ENCODE measurements at regions of chr13 and their contacts with region 1.

Region 1: DNA sequence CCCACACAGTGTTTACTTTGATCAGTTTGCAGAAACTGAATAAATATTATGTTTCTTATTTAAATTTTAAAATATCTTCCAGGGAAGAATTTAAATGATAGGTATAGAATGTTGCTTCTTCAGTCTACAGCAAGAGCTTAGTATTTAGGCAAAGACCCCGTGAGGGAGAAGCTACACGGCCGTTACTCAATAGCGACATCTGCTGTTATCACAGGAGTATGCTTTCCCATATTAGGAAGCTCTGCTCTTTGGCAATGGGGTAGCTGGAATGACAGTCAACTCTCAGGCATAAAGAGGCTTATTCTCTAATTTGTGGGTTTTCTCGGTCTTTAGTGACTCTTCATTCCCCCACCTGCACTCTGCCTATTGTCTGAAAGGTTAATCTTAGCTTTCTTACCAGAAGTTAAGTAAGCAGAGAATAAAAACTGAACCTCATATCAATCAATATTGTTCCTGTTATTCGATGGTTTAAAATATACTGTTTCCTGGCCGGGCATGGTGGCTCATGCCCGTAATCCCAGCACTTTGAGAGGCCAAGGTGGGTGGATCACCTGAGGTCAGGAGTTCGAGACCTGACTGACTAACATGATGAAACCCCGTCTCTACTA is 13.2 kb upstream of the LHFPL6 start:
- DNase-seq: no peak
- H3K4me3 ChIP-seq: no peak overlapping the region
- H3K27ac ChIP-seq: no peak overlapping the region
- H3K4me1 ChIP-seq: peaks cover 0 to 9% (median 0%) of the 10 kb centered on the region in 4 donors
- H3K27me3 ChIP-seq: no peaks in the 10 kb centered on the region
- CTCF ChIP-seq: peak; percentile 87 to 96 (median 93)
- EP300 ChIP-seq: no peak
- POLR2A ChIP-seq: no peak

Region 2: DNA sequence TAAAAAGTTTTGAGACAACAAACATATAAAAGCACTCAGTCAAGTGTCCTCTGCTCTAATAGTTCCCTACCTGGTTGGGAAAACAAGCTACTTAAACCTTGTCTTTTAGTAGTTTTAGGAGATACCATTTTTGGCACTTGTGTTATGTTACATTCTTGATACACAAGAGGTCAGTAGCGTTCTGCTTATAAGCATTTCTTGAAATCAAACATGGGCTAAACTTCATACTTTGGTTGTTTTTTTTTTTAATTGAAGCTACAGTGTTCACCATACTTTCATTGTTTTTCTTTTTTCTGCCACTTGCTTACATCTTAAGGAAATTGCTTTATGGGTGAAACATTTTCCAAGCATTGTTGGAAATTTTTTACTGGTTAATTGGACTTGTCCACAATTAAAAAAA is 565.0 kb before region 1 on chr13:
- intact Hi-C with region 1: loop called (anchors 5 kb)
- DNase-seq: no peak
- H3K4me3 ChIP-seq: no peak overlapping the region
- H3K27ac ChIP-seq: no peak overlapping the region
- H3K4me1 ChIP-seq: no peaks in the 10 kb centered on the region
- H3K27me3 ChIP-seq: no peaks in the 10 kb centered on the region
- CTCF ChIP-seq: peak; percentile 13 to 32 (median 21)
- EP300 ChIP-seq: no peak
- POLR2A ChIP-seq: no peak

Region 3: GRCh38 chr13:39144941-39145533 is 471.2 kb before region 1 on chr13:
- intact Hi-C with region 1: loop called (anchors 2 kb)
- DNase-seq: no peak
- H3K4me3 ChIP-seq: peak overlapping the region in 2 of 4 donors; percentile 8 to 13
- H3K27ac ChIP-seq: peak overlapping the region in 1 of 4 donors; percentile 18
- H3K4me1 ChIP-seq: peaks cover 3 to 6% (median 4%) of the 10 kb centered on the region in 4 donors
- H3K27me3 ChIP-seq: no peaks in the 10 kb centered on the region
- CTCF ChIP-seq: peak; percentile 72 to 82 (median 75)
- EP300 ChIP-seq: no peak
- POLR2A ChIP-seq: no peak

Region 4: GRCh38 chr13:39263033-39263432 is 353.2 kb before region 1 on chr13:
- intact Hi-C with region 1: loop called (anchors 5 kb)
- DNase-seq: no peak
- H3K4me3 ChIP-seq: no peak overlapping the region
- H3K27ac ChIP-seq: no peak overlapping the region
- H3K4me1 ChIP-seq: peaks cover 11 to 14% (median 12%) of the 10 kb centered on the region in 4 donors
- H3K27me3 ChIP-seq: no peaks in the 10 kb centered on the region
- CTCF ChIP-seq: peak; percentile 64 to 72 (median 68)
- EP300 ChIP-seq: no peak
- POLR2A ChIP-seq: no peak

Region 5: GRCh38 chr13:39415008-39415802 is 201.0 kb before region 1 on chr13:
- intact Hi-C with region 1: loop called (anchors 5 kb)
- DNase-seq: no peak
- H3K4me3 ChIP-seq: peak overlapping the region in 2 of 4 donors; percentile 1 to 6
- H3K27ac ChIP-seq: peak overlapping the region; percentile 13 to 58 (median 47)
- H3K4me1 ChIP-seq: peaks cover 51 to 76% (median 56%) of the 10 kb centered on the region in 4 donors
- H3K27me3 ChIP-seq: no peaks in the 10 kb centered on the region
- CTCF ChIP-seq: peak; percentile 45 to 63 (median 51)
- EP300 ChIP-seq: no peak
- POLR2A ChIP-seq: no peak

Region 6: GRCh38 chr13:39542361-39542760 is 73.8 kb before region 1 on chr13:
- intact Hi-C with region 1: no loop called
- DNase-seq: no peak
- H3K4me3 ChIP-seq: no peak overlapping the region
- H3K27ac ChIP-seq: no peak overlapping the region
- H3K4me1 ChIP-seq: peaks cover 0 to 22% (median 2%) of the 10 kb centered on the region in 4 donors
- H3K27me3 ChIP-seq: no peaks in the 10 kb centered on the region
- CTCF ChIP-seq: no peak
- EP300 ChIP-seq: no peak
- POLR2A ChIP-seq: no peak

Measured in esophagus muscularis mucosa (tissue), 4 donors.